Endothelial cell of umbilical vein (primary cell): ENCODE measurements at regions of chr10 and their contacts with region 1.

Region 1: GRCh38 chr10:67849331-67850011 is 11.5 kb upstream of the DNAJC12 start:
- DNase-seq: peak; percentile 92
- H3K4me3 ChIP-seq: peak overlapping the region; percentile 66 to 88 (median 74)
- H3K27ac ChIP-seq: peak overlapping the region; percentile 74
- H3K4me1 ChIP-seq: peaks cover 3% of the 10 kb centered on the region
- H3K27me3 ChIP-seq: no peaks in the 10 kb centered on the region
- CTCF ChIP-seq: no peak
- POLR2A ChIP-seq: peak; percentile 61

Region 2: GRCh38 chr10:67772894-67773511 is 76.5 kb before region 1 on chr10:
- CTCF ChIA-PET with region 1: no interaction called
- POLR2A ChIA-PET with region 1: no interaction called
- dilution Hi-C with region 1: no loop called
- intact Hi-C with region 1: no loop called
- DNase-seq: no peak
- H3K4me3 ChIP-seq: no peak overlapping the region
- H3K27ac ChIP-seq: no peak overlapping the region
- H3K4me1 ChIP-seq: peaks cover 29% of the 10 kb centered on the region
- H3K27me3 ChIP-seq: no peaks in the 10 kb centered on the region
- CTCF ChIP-seq: no peak
- POLR2A ChIP-seq: no peak

Region 3: GRCh38 chr10:67788025-67788886 is 61.2 kb before region 1 on chr10:
- CTCF ChIA-PET with region 1: interaction called, 17 read pairs
- POLR2A ChIA-PET with region 1: no interaction called
- dilution Hi-C with region 1: no loop called
- intact Hi-C with region 1: no loop called
- DNase-seq: peak; percentile 26
- H3K4me3 ChIP-seq: no peak overlapping the region
- H3K27ac ChIP-seq: no peak overlapping the region
- H3K4me1 ChIP-seq: no peaks in the 10 kb centered on the region
- H3K27me3 ChIP-seq: peaks cover 0 to 5% of the 10 kb centered on the region in 2 experiments
- CTCF ChIP-seq: peak; percentile 72 to 77
- POLR2A ChIP-seq: no peak

Region 4: DNA sequence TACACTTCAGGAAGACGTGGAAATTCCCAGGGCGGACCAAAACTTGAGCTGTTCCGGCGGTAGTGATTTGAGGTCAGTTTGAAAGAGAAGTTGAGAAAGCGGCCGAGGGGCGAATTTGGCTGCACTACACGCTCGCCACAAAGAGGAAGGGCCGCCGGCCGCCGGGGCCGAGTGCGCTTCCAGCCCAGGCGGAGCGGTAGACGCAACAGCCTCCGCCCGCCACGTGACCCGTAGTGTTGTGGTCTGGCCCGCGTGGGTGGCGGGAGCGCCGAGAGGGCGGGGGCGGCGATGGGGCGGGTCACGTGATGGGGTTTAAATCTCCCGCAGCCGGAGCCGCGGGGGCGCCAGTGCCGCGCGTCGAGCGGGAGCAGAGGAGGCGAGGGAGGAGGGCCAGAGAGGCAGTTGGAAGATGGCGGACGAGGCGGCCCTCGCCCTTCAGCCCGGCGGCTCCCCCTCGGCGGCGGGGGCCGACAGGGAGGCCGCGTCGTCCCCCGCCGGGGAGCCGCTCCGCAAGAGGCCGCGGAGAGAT is 34.9 kb after region 1 on chr10 and contains the start of gene SIRT1:
- CTCF ChIA-PET with region 1: no interaction called
- POLR2A ChIA-PET with region 1: interaction called, 4 read pairs
- dilution Hi-C with region 1: no loop called
- intact Hi-C with region 1: loop called (anchors 1 kb)
- DNase-seq: peak; percentile 96
- H3K4me3 ChIP-seq: peak within 1 kb of the TSS; percentile 95 to 97 (median 96)
- H3K27ac ChIP-seq: peak within 1 kb of the TSS; percentile 68
- H3K4me1 ChIP-seq: peaks cover 11% of the 10 kb centered on the region
- H3K27me3 ChIP-seq: no peaks in the 10 kb centered on the region
- CTCF ChIP-seq: no peak
- POLR2A ChIP-seq: peak; percentile 96
- total RNA-seq, gene SIRT1: 14.8 and 15.1 TPM in 2 replicates

Region 5: DNA sequence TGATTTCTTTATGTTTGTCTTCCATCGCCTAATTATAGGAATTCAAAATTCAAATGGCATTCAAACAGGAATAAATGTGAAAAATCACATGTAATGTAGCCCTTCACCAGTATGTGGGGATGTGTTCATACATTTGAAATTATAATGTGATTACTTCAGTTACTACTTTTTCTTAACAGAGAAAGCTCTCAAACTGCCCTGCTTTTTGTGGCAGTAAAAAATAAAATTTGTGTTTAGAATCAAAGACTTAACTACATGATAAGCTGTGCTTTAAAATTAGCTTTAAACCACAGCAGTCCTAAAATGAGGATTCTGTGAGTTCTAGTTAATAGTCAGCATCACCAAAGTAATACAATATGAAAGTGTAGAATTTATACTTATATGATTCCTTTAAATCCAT is 233.4 kb after region 1 on chr10:
- CTCF ChIA-PET with region 1: interaction called, 11 read pairs
- POLR2A ChIA-PET with region 1: no interaction called
- dilution Hi-C with region 1: no loop called
- intact Hi-C with region 1: loop called (anchors 10 kb)
- DNase-seq: peak; percentile 52
- H3K4me3 ChIP-seq: no peak overlapping the region
- H3K27ac ChIP-seq: no peak overlapping the region
- H3K4me1 ChIP-seq: peaks cover 6% of the 10 kb centered on the region
- H3K27me3 ChIP-seq: no peaks in the 10 kb centered on the region
- CTCF ChIP-seq: peak in 1 of 2 donors; percentile 22
- POLR2A ChIP-seq: no peak

Region 6: GRCh38 chr10:68301790-68302502 is 452.5 kb after region 1 on chr10:
- CTCF ChIA-PET with region 1: interaction called, 62 read pairs
- POLR2A ChIA-PET with region 1: no interaction called
- dilution Hi-C with region 1: no loop called
- intact Hi-C with region 1: no loop called
- DNase-seq: peak; percentile 63
- H3K4me3 ChIP-seq: no peak overlapping the region
- H3K27ac ChIP-seq: no peak overlapping the region
- H3K4me1 ChIP-seq: peaks cover 3% of the 10 kb centered on the region
- H3K27me3 ChIP-seq: no peaks in the 10 kb centered on the region
- CTCF ChIP-seq: peak; percentile 26 to 36
- POLR2A ChIP-seq: no peak